Left cardiac atrium (tissue), 4 donors: ENCODE measurements at regions of chr1 and their contacts with region 1.

Region 1: GRCh38 chr1:226809785-226810571 is 60.4 kb upstream of the PSEN2 start:
- DNase-seq: no peak
- ATAC-seq: no peak

Region 2: DNA sequence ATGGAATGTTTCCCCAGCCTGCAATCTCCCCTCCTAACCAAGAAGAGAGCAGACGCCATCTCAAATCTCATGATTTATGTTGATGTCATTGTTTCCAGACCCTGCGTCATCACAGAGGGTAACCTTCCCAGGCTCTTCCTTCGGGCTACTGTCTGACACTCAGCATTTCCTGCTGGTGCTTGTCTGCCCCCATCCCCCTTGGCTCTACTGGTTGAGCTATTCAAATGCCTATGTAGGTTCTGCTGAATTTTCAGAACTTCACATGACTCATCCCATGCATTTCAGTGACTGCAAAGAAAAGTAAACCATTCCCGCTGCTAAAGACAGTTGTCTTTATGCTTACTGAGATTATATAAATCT is 46.1 kb before region 1 on chr1:
- intact Hi-C with region 1: loop called in 1 of 2 experiments (anchors 5 kb)
- DNase-seq: no peak
- ATAC-seq: no peak

Region 3: DNA sequence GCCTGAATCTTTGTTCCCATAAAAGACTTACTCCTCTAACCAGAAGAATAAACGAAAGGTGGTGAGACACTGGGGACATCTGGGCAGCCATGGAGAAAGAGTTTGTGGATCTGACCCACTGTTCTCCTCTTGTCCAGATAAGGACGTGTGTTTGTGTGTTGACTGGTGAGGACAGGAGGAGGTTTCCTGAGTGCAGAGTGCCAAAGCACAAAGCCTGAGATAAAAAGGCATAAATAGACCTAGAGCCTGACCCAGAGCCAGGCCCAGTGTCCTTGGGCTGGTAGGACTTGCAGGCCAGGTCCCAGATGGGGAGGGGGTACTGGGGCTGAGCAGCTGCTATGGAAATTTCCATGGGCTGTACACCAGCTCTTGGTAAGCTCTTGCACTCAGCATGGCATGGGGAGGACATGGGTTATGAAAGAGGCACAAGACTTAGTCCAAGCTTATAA is 110.5 kb after region 1 on chr1:
- intact Hi-C with region 1: no loop called
- DNase-seq: peak; percentile 74
- ATAC-seq: peak; percentile 93 to 94